Caco-2 (cell line): ENCODE measurements at regions of chr10 and their contacts with region 1.

Region 1: DNA sequence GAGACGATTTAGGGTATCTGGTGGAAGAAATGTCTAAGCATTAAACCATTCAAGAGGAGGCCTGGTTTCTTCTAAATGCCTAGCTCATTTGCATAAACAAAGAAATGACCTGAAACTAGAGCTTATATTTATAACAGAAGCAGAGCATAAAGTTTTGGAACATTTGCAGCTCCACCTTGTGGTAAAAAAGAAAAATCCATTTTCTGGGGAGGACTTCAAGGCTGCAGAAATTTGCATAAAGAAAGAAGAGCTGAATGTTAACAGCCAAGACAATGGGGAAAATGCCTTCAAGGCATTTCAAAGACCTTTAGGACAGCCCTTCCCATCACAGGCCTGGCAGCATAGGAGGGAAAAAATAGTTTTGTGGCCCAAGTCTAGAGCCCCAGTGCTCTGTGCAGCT is 362.0 kb downstream of the ZNF248 start:
- DNase-seq: no peak
- H3K4me3 ChIP-seq: no peak overlapping the region
- H3K4me3 Mint-ChIP-seq: no peak overlapping the region
- H3K27ac Mint-ChIP-seq: no peak overlapping the region
- H3K4me1 ChIP-seq: peaks cover 19% of the 10 kb centered on the region
- H3K4me1 Mint-ChIP-seq: peaks cover 22% of the 10 kb centered on the region
- H3K27me3 ChIP-seq: no peaks in the 10 kb centered on the region
- H3K27me3 Mint-ChIP-seq: no peaks in the 10 kb centered on the region
- CTCF ChIP-seq: peak; percentile 19 to 39

Region 2: DNA sequence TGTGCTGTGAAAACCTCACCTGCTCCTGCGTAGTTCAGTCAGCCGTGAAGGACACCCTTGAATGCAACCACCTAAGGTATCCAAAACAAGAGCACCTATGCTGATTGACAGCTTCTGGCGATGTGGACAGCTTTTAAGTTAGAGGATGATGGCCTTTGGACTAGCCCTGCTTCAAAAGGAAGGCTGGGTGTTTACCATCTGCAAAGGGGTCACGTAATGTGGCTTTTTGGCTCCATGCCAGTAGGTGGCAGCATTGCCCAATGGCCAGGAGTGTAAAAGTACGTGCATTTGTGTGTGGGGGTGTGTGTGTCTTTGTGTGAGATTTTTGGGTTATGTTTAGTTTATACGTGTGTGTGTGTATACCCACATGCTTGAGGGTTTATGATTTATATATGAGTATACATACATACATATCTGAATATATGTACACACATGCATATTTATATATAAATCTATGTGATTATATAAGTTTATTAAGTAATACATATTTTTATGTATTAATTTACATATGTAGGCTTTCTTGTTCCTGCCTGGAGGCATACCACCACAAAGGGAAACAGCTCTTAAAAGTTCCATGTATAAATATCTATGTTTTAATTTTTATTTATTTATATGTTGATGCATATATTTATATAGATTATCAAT is 606.4 kb before region 1 on chr10:
- CTCF ChIA-PET with region 1: interaction called, 5 read pairs
- POLR2A ChIA-PET with region 1: no interaction called
- intact Hi-C with region 1: loop called (anchors 1 kb)
- DNase-seq: peak; percentile 84 to 89
- H3K4me3 ChIP-seq: no peak overlapping the region
- H3K4me3 Mint-ChIP-seq: no peak overlapping the region
- H3K27ac Mint-ChIP-seq: no peak overlapping the region
- H3K4me1 ChIP-seq: peaks cover 5% of the 10 kb centered on the region; the same call in 1 of the 2 replicates
- H3K4me1 Mint-ChIP-seq: peaks cover 7% of the 10 kb centered on the region
- H3K27me3 ChIP-seq: no peaks in the 10 kb centered on the region
- H3K27me3 Mint-ChIP-seq: no peaks in the 10 kb centered on the region
- CTCF ChIP-seq: peak; percentile 96

Region 3: GRCh38 chr10:37434091-37434490 is 61.3 kb before region 1 on chr10:
- CTCF ChIA-PET with region 1: interaction called, 4 read pairs
- POLR2A ChIA-PET with region 1: no interaction called
- intact Hi-C with region 1: loop called (anchors 1 kb)
- DNase-seq: peak in 1 of 2 experiments; percentile 6
- H3K4me3 ChIP-seq: no peak overlapping the region
- H3K4me3 Mint-ChIP-seq: no peak overlapping the region
- H3K27ac Mint-ChIP-seq: no peak overlapping the region
- H3K4me1 ChIP-seq: no peaks in the 10 kb centered on the region
- H3K4me1 Mint-ChIP-seq: no peaks in the 10 kb centered on the region
- H3K27me3 ChIP-seq: no peaks in the 10 kb centered on the region
- H3K27me3 Mint-ChIP-seq: no peaks in the 10 kb centered on the region
- CTCF ChIP-seq: peak; percentile 29 to 50